Transverse colon (tissue), 4 donors: ENCODE measurements at regions of chr11 and their contacts with region 1.

Region 1: GRCh38 chr11:74699615-74700396 is 31.4 kb downstream of the CHRDL2 start:
- DNase-seq: no peak
- H3K4me3 ChIP-seq: no peak overlapping the region
- H3K27ac ChIP-seq: no peak overlapping the region
- H3K4me1 ChIP-seq: peaks cover 6 to 17% (median 8%) of the 10 kb centered on the region in 4 donors
- H3K27me3 ChIP-seq: no peaks in the 10 kb centered on the region
- CTCF ChIP-seq: no peak
- EP300 ChIP-seq: no peak
- POLR2A ChIP-seq: no peak

Region 2: GRCh38 chr11:74634537-74634936 is 65.3 kb before region 1 on chr11:
- in situ Hi-C with region 1: no loop called
- intact Hi-C with region 1: no loop called
- DNase-seq: peak; percentile 14
- H3K4me3 ChIP-seq: no peak overlapping the region
- H3K27ac ChIP-seq: peak overlapping the region; percentile 33 to 69 (median 49)
- H3K4me1 ChIP-seq: peaks cover 0 to 32% (median 11%) of the 10 kb centered on the region in 4 donors
- H3K27me3 ChIP-seq: no peaks in the 10 kb centered on the region
- CTCF ChIP-seq: peak in 3 of 5 experiments; percentile 23 to 34 (median 29)
- EP300 ChIP-seq: no peak
- POLR2A ChIP-seq: no peak

Region 3: GRCh38 chr11:74726547-74727182 is 26.9 kb after region 1 on chr11:
- in situ Hi-C with region 1: no loop called
- intact Hi-C with region 1: loop called (anchors 1 kb)
- DNase-seq: peak; percentile 76
- H3K4me3 ChIP-seq: no peak overlapping the region
- H3K27ac ChIP-seq: peak overlapping the region; percentile 44 to 56 (median 46)
- H3K4me1 ChIP-seq: peaks cover 3 to 19% (median 14%) of the 10 kb centered on the region in 4 donors
- H3K27me3 ChIP-seq: peaks cover 26% of the 10 kb centered on the region
- CTCF ChIP-seq: peak; percentile 89 to 96 (median 92)
- EP300 ChIP-seq: no peak
- POLR2A ChIP-seq: no peak

Region 4: GRCh38 chr11:75142714-75143419 is 443.1 kb after region 1 on chr11:
- in situ Hi-C with region 1: no loop called
- intact Hi-C with region 1: no loop called
- DNase-seq: peak; percentile 70
- H3K4me3 ChIP-seq: no peak overlapping the region
- H3K27ac ChIP-seq: peak overlapping the region; percentile 14 to 61 (median 35)
- H3K4me1 ChIP-seq: peaks cover 0 to 44% (median 19%) of the 10 kb centered on the region in 4 donors
- H3K27me3 ChIP-seq: no peaks in the 10 kb centered on the region
- CTCF ChIP-seq: peak in 1 of 5 experiments; percentile 20
- EP300 ChIP-seq: no peak
- POLR2A ChIP-seq: no peak